Mammary epithelial cell (primary cell): ENCODE measurements at regions of chr11 and their contacts with region 1.

Region 1: GRCh38 chr11:75858611-75859010 is 43.6 kb downstream of the UVRAG start:
- DNase-seq: peak; percentile 14
- H3K4me3 ChIP-seq: no peak overlapping the region
- H3K27ac ChIP-seq: no peak overlapping the region
- H3K4me1 ChIP-seq: peaks cover 6% of the 10 kb centered on the region
- H3K27me3 ChIP-seq: peaks cover 3% of the 10 kb centered on the region
- CTCF ChIP-seq: no peak

Region 2: GRCh38 chr11:75445315-75445953 is 413.2 kb before region 1 on chr11:
- CTCF ChIA-PET with region 1: no interaction called
- dilution Hi-C with region 1: no loop called
- in situ Hi-C with region 1: no loop called
- intact Hi-C with region 1: loop called (anchors 10 kb)
- DNase-seq: peak; percentile 27
- H3K4me3 ChIP-seq: no peak overlapping the region
- H3K27ac ChIP-seq: no peak overlapping the region
- H3K4me1 ChIP-seq: peaks cover 8% of the 10 kb centered on the region
- H3K27me3 ChIP-seq: no peaks in the 10 kb centered on the region
- CTCF ChIP-seq: peak; percentile 92 to 98

Region 3: GRCh38 chr11:75814686-75815344 is 43.8 kb before region 1 on chr11 and contains the start of gene UVRAG:
- CTCF ChIA-PET with region 1: no interaction called
- dilution Hi-C with region 1: no loop called
- in situ Hi-C with region 1: loop called in 1 of 2 experiments (anchors 10 kb)
- intact Hi-C with region 1: loop called (anchors 2 kb)
- DNase-seq: peak; percentile 100
- H3K4me3 ChIP-seq: peak within 1 kb of the TSS; percentile 81 to 86 (median 82)
- H3K27ac ChIP-seq: peak within 1 kb of the TSS; percentile 87
- H3K4me1 ChIP-seq: peaks cover 27% of the 10 kb centered on the region
- H3K27me3 ChIP-seq: no peaks in the 10 kb centered on the region
- CTCF ChIP-seq: peak in 1 of 2 donors; percentile 22
- total RNA-seq, gene UVRAG: 17.5 to 20.4 TPM